GM12878 (cell line): ENCODE measurements at regions of chr18 and their contacts with region 1.

Region 1: DNA sequence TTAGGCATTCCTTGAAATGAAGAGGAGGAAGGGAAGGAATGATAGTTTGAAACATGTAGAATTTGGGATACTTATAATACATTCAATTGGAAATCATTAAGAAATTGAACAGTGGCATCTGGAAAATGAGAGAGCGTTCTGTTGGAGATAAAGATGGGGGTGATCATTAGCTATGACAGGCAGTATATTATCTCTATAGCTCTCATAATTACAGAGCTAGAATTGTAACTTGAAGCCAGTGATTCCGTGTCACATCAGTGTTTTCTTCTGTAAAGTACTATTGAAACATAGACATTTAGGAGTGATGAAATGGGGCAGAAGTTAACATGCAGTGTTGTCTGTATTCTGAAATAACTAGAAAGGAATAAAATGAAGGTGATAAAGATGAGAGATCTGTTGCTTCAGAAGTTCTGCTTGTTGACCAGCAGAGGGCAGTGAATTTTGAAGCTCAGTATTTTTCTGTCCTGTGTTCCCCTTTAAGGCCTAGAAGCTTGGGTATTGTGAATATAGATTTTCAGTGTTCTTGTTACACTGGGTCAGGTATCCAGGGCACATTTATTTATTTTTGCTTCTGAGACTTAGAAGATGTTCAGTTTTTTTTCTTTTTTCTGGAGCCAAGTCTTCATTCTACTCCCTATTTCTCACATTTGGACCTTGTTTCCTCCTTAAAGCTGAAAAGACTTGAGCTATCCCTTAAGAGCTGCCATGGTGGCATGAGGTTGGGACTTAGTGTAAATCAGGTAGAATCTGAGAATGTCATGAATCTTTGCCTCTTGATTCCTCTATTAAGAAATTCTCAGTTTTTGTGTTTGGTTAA is 157.4 kb downstream of the TAF4B start:
- DNase-seq: peak; percentile 15
- ATAC-seq: peak; percentile 96
- H3K4me3 ChIP-seq: no peak overlapping the region
- H3K27ac ChIP-seq: no peak overlapping the region
- H3K4me1 ChIP-seq: 0 out of 2 replicates have a peak, but pooled peaks cover 3% of the 10 kb centered on the region
- H3K27me3 ChIP-seq: no peaks in the 10 kb centered on the region
- CTCF ChIP-seq: peak; percentile 62 to 76 (median 62)
- EP300 ChIP-seq: no peak
- POLR2A ChIP-seq: no peak
- RAD21 ChIP-seq: peak; percentile 77

Region 2: GRCh38 chr18:24868760-24869237 is 1514.9 kb before region 1 on chr18:
- CTCF ChIA-PET with region 1: no interaction called
- POLR2A ChIA-PET with region 1: no interaction called
- RAD21 ChIA-PET with region 1: no interaction called
- SMC1A ChIA-PET with region 1: no interaction called
- in situ Hi-C with region 1: no loop called
- intact Hi-C with region 1: no loop called
- DNase-seq: no peak
- ATAC-seq: no peak
- H3K4me3 ChIP-seq: no peak overlapping the region
- H3K27ac ChIP-seq: no peak overlapping the region
- H3K4me1 ChIP-seq: no peaks in the 10 kb centered on the region
- H3K27me3 ChIP-seq: no peaks in the 10 kb centered on the region; a peak in 3 of 4 replicates
- CTCF ChIP-seq: no peak
- EP300 ChIP-seq: no peak
- POLR2A ChIP-seq: no peak
- RAD21 ChIP-seq: no peak

Region 3: GRCh38 chr18:26356045-26356785 is 27.4 kb before region 1 on chr18:
- CTCF ChIA-PET with region 1: interaction called, 18 read pairs
- POLR2A ChIA-PET with region 1: no interaction called
- RAD21 ChIA-PET with region 1: interaction called, 3 read pairs
- SMC1A ChIA-PET with region 1: interaction called, 7 read pairs
- in situ Hi-C with region 1: no loop called
- intact Hi-C with region 1: no loop called
- DNase-seq: peak; percentile 1
- ATAC-seq: peak; percentile 81
- H3K4me3 ChIP-seq: 0 out of 2 replicates have a peak overlapping the region, but pooled peaks have one; percentile 2
- H3K27ac ChIP-seq: peak overlapping the region; percentile 76
- H3K4me1 ChIP-seq: peaks cover 13% of the 10 kb centered on the region
- H3K27me3 ChIP-seq: no peaks in the 10 kb centered on the region
- CTCF ChIP-seq: no peak
- EP300 ChIP-seq: no peak
- POLR2A ChIP-seq: no peak
- RAD21 ChIP-seq: no peak

Region 4: DNA sequence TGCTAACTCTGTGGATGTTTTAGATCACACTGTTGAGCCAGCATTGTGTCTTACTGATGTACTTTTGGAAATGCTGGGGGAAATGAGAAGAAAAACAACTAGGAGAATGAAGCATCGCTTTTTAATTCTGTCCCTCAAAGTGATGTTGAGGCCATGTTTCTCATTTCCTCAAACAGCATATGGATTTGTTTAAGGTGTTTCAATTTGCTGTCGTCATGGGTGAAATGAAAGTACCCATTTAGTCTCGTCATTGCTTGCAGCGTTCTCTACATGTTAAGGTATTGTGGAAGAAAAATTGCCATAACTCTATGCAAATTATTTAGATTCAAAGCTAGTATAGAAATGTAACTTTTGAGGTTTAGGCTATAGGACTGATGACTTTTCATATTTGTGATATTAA is 13.4 kb after region 1 on chr18:
- CTCF ChIA-PET with region 1: interaction called, 23 read pairs
- POLR2A ChIA-PET with region 1: no interaction called
- RAD21 ChIA-PET with region 1: interaction called, 4 read pairs
- SMC1A ChIA-PET with region 1: interaction called, 8 read pairs
- in situ Hi-C with region 1: no loop called
- intact Hi-C with region 1: no loop called
- DNase-seq: no peak
- ATAC-seq: peak; percentile 61
- H3K4me3 ChIP-seq: no peak overlapping the region
- H3K27ac ChIP-seq: no peak overlapping the region
- H3K4me1 ChIP-seq: no peaks in the 10 kb centered on the region
- H3K27me3 ChIP-seq: no peaks in the 10 kb centered on the region
- CTCF ChIP-seq: no peak
- EP300 ChIP-seq: no peak
- POLR2A ChIP-seq: no peak
- RAD21 ChIP-seq: no peak

Region 5: DNA sequence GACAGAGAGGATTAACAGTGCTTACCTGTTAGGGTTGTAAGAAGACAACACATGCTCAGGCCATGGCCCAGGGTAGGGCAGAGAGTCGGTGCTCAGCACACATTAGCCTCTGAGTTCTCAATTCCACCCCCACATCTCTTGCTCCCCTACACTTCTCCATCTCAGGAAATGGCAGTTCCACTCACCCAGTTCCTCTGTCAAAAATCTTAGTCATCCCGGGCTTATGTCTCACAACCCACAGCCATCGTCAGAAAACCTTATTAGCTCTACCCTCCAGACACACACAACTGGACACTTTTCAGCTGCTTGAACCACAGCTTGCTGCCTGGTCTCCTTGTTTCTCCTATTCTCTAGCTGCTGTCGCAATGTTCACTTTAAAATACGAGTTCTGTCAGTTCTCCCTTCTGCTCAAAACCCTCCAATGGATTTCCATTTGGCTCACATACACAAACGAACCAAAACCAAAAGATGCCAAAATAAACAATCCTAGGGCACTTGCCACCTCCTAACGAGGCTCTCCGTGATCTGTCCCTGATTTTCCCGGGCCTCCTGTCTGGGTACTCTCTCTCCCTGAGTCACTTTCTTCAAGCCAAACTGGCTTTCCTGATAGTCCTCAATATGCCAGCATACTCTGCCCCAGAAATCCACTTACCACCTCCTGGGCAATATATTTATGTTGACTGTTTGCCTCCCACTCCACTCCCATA is 75.0 kb after region 1 on chr18:
- CTCF ChIA-PET with region 1: interaction called, 25 read pairs
- POLR2A ChIA-PET with region 1: no interaction called
- RAD21 ChIA-PET with region 1: interaction called, 8 read pairs
- SMC1A ChIA-PET with region 1: interaction called, 9 read pairs
- in situ Hi-C with region 1: no loop called
- intact Hi-C with region 1: loop called (anchors 2 kb)
- DNase-seq: peak; percentile 70
- ATAC-seq: peak; percentile 75
- H3K4me3 ChIP-seq: no peak overlapping the region
- H3K27ac ChIP-seq: peak overlapping the region; percentile 75
- H3K4me1 ChIP-seq: peaks cover 48% of the 10 kb centered on the region
- H3K27me3 ChIP-seq: no peaks in the 10 kb centered on the region
- CTCF ChIP-seq: no peak
- EP300 ChIP-seq: peak; percentile 48 to 68; a peak in 2 of 4 replicates
- POLR2A ChIP-seq: peak; percentile 33; the same call in 1 of the 2 replicates
- RAD21 ChIP-seq: no peak

Region 6: DNA sequence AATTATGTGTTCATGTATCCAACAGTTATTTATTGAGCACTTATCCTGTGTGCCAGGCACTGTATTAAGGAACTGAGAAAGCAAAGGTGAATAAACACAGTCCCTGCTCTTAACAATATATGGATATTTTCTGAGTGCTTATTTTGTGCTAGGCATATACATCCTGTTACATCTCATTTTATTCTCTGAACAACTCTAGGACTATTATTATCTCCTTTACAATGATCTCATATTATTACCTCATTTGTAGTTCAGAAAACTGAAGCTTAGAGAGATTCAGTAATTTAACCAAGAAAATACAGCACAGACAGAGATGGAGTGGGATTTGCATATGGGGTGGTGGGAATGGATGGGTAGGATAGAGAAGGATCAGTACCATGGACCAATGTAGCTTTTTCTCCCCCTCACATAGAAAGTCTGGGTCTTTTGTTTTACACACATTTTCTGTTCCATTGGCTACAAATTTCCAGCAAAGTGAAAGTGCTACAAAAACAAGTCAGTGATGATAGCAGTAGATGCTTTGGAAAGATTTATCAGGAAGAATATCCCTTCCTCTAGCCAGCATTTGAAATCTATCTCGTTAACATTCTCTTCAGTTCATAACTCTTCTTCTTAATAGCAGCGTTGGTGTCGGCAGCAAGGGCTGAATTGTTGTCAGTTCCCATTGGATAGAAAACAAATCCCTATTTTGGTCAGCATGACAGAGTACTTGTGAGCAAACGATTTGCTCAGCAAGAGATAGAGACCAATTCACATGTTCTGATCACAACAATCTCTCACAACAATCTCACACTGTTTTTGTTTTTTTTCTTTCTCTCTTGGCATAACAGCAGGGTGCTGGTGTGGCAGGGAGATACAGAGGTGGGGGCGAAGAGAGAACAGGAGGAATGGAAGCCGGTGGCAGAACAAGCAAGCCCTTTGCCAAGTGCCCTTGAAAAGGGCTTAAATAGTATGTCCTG is 266.9 kb after region 1 on chr18:
- CTCF ChIA-PET with region 1: interaction called, 14 read pairs
- POLR2A ChIA-PET with region 1: no interaction called
- RAD21 ChIA-PET with region 1: interaction called, 3 read pairs
- SMC1A ChIA-PET with region 1: interaction called, 18 read pairs
- in situ Hi-C with region 1: no loop called
- intact Hi-C with region 1: loop called (anchors 1 kb)
- DNase-seq: no peak
- ATAC-seq: no peak
- H3K4me3 ChIP-seq: no peak overlapping the region
- H3K27ac ChIP-seq: no peak overlapping the region
- H3K4me1 ChIP-seq: peaks cover 8% of the 10 kb centered on the region
- H3K27me3 ChIP-seq: peaks cover 5 to 22% of the 10 kb centered on the region in 2 experiments
- CTCF ChIP-seq: no peak
- EP300 ChIP-seq: no peak
- POLR2A ChIP-seq: no peak
- RAD21 ChIP-seq: no peak

Region 7: GRCh38 chr18:27461957-27462356 is 1078.3 kb after region 1 on chr18:
- CTCF ChIA-PET with region 1: no interaction called
- POLR2A ChIA-PET with region 1: no interaction called
- RAD21 ChIA-PET with region 1: no interaction called
- SMC1A ChIA-PET with region 1: no interaction called
- in situ Hi-C with region 1: no loop called
- intact Hi-C with region 1: no loop called
- DNase-seq: no peak
- ATAC-seq: no peak
- H3K4me3 ChIP-seq: no peak overlapping the region
- H3K27ac ChIP-seq: no peak overlapping the region
- H3K4me1 ChIP-seq: no peaks in the 10 kb centered on the region
- H3K27me3 ChIP-seq: no peaks in the 10 kb centered on the region
- CTCF ChIP-seq: no peak
- EP300 ChIP-seq: no peak
- POLR2A ChIP-seq: no peak
- RAD21 ChIP-seq: no peak